ENCODE measurements at regions of chr3 and their contacts with region 1.

Region 1: DNA sequence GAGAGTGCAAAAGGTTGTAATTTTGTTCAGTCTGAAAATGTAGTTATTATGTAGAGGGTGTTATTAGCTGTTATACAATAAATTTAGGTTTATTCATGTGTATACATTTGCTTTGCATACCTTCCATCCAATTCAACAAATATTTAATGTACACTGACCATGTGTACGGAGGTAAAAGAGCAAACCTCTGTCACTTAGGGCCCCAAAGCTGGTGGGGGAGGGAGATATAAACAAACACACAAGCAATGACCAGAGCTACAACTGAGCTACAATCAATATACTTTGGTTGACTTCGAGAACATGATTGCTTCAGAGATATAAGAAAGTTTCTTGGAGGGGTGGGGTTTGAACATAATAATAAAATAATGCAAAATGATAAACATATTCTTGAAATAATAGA is 17.5 kb upstream of the BCL6 start:
- DNase-seq: no peak
- ATAC-seq: no peak

Region 2: DNA sequence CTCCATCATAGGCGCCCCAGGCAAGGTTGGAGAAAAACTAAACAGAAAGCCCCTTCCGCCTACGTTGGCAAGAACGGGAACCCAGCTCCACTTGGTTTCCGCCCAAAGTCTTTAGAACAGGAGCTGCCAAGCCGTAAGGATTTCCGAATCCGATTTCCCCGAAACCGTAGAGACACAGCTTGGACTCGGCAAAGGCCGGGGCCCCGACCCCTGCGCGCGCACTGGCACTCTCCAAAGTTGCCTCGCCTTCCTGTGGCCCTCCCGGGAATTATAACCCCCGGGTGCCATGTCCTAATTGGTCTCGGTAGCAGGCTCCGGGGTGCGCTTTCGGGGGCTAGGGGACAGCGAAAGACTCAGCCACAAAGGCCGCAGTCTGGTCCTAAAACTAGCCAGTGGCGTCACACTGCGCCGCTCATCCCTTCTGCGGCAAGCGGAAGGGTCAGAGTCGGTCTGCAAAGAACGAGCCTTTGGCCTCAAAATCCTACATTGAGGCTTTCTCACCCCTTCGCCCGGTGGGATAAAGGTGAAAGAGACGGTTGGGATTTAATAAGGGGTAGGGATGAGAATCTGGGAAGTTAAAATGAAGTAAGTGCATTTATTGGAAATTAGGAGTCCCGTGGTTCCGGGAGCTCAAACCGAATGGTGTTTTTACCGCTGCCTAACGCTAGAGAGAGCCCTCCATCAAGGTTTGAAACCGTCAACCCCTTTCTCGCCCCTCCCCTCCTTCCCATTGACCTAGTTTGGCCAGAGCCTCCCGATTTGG is 24.3 kb before region 1 on chr3:
- intact Hi-C with region 1: no loop called
- DNase-seq: peak; percentile 82
- ATAC-seq: peak; percentile 71

Region 3: GRCh38 chr3:187799942-187800641 is 37.3 kb after region 1 on chr3:
- intact Hi-C with region 1: loop called (anchors 1 kb)
- DNase-seq: no peak
- ATAC-seq: no peak